Dendritic cell treated with granulocyte-macrophage colony-stimulating factor and Interleukin-4, amounts not matched to agents 40 ng/mL and 50 ng/mL, for 4 days (primary cell): ENCODE measurements at regions of chr2 and their contacts with region 1.

Region 1: DNA sequence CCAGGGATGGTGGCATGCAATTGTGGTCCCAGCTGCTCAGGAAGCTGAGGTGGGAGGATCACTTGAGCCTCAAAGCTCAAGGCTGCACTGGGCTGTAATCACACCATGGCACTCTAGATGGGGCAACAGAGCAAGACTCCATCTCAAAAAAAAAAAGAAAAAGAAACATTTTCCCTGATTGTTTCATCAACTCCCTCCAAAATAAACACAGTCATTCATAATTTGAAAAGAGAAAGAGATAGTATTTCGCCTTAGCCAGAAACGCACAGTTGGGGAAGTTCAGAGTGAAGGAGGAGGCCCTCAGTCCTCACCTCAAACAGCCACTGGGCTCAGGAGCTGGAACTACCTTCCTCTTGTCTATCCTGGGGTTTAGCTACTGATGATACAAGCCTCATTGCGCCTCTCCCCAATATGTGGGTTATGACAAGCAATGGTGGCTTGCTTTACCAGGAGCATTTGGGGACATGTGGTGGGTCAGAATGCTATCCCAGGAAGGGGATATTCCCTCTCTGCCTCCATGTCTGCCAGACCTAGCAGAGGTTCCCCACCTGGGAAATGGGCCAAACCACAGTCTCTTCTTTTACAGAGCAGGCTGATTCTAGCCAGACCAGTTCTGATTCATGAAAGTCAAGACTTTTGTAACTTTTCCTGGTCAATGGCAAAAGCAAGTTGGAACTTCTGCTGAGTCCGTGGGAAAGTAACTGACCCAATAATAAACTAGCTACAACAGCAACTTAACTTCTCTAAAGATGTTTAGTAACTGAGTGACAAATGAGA is 22.2 kb upstream of the TMEM87B start:
- H3K4me3 Mint-ChIP-seq: no peak overlapping the region
- H3K27ac Mint-ChIP-seq: peak overlapping the region; percentile 66
- H3K4me1 Mint-ChIP-seq: peaks cover 16% of the 10 kb centered on the region
- H3K27me3 Mint-ChIP-seq: peaks cover 3% of the 10 kb centered on the region

Region 2: GRCh38 chr2:111986116-111986900 is 46.6 kb before region 1 on chr2:
- intact Hi-C with region 1: loop called (anchors 10 kb)
- H3K4me3 Mint-ChIP-seq: no peak overlapping the region
- H3K27ac Mint-ChIP-seq: no peak overlapping the region
- H3K4me1 Mint-ChIP-seq: no peaks in the 10 kb centered on the region
- H3K27me3 Mint-ChIP-seq: no peaks in the 10 kb centered on the region

Region 3: GRCh38 chr2:112004253-112004645 is 28.6 kb before region 1 on chr2:
- intact Hi-C with region 1: loop called (anchors 5 kb)
- H3K4me3 Mint-ChIP-seq: peak overlapping the region; percentile 30
- H3K27ac Mint-ChIP-seq: peak overlapping the region; percentile 83
- H3K4me1 Mint-ChIP-seq: peaks cover 63% of the 10 kb centered on the region
- H3K27me3 Mint-ChIP-seq: peaks cover 7% of the 10 kb centered on the region